ENCODE measurements at regions of chr1 and their contacts with region 1.

Region 1: GRCh38 chr1:221741711-221742554 is at the start of gene DUSP10:
- DNase-seq: peak; percentile 97 to 100 (median 99)

Region 2: GRCh38 chr1:221478050-221478949 is 263.6 kb before region 1 on chr1:
- intact Hi-C with region 1: loop called (anchors 5 kb)
- DNase-seq: peak; percentile 33 to 95 (median 71)

Region 3: DNA sequence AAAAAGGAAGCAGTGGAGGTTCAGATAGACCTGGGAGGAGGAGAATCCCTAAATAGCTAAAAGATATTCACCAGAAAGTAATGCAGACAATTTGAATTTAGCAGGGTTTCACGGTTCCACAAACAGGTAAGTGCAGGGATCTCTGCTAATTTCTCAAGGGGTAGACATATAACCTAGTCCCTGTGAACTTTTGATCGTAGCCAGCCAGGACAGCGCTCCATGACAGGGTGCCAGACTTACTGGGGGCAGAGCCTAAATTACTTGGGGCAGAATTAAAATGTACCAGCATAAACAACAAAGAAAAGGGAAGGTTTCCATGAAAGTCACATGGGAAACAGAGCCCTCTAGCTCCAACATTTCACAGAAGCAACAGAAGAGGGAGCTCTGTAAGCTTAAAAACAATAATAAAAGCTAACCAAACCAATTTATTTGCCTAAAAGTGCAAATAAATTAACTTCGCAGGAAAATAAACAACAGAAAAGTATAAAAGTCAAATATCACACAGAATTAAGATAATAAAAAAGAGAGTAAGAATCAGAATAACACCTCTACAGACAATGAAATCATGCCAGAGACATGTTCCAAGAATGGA is 198.3 kb before region 1 on chr1:
- intact Hi-C with region 1: loop called (anchors 5 kb)
- DNase-seq: no peak

Region 4: GRCh38 chr1:221637641-221638041 is 104.3 kb before region 1 on chr1:
- intact Hi-C with region 1: loop called (anchors 5 kb)
- DNase-seq: peak in 6 of 10 donors; percentile 4 to 78 (median 40)

Region 5: GRCh38 chr1:221708987-221709386 is 32.9 kb before region 1 on chr1:
- intact Hi-C with region 1: loop called (anchors 5 kb)
- DNase-seq: peak in 8 of 10 donors; percentile 23 to 93 (median 44)

Region 6: GRCh38 chr1:221761354-221762002 is 19.5 kb after region 1 on chr1:
- intact Hi-C with region 1: no loop called
- DNase-seq: no peak

Region 7: GRCh38 chr1:222465211-222466041 is 723.5 kb after region 1 on chr1:
- intact Hi-C with region 1: loop called (anchors 5 kb)
- DNase-seq: peak; percentile 77 to 98 (median 85)